WTC11 (cell line): ENCODE measurements at regions of chr1 and their contacts with region 1.

Region 1: GRCh38 chr1:23559136-23559984 is at the start of gene ID3:
- DNase-seq: peak; percentile 96
- ATAC-seq: peak; percentile 47
- H3K4me3 Mint-ChIP-seq: peak within 1 kb of the TSS; percentile 94
- H3K27ac Mint-ChIP-seq: peak within 1 kb of the TSS; percentile 98
- H3K4me1 Mint-ChIP-seq: peaks cover 74% of the 10 kb centered on the region
- H3K27me3 Mint-ChIP-seq: no peaks in the 10 kb centered on the region
- CTCF ChIP-seq: no peak
- total RNA-seq, gene ID3: 168 to 278 TPM (median 273 TPM) in 3 replicates

Region 2: DNA sequence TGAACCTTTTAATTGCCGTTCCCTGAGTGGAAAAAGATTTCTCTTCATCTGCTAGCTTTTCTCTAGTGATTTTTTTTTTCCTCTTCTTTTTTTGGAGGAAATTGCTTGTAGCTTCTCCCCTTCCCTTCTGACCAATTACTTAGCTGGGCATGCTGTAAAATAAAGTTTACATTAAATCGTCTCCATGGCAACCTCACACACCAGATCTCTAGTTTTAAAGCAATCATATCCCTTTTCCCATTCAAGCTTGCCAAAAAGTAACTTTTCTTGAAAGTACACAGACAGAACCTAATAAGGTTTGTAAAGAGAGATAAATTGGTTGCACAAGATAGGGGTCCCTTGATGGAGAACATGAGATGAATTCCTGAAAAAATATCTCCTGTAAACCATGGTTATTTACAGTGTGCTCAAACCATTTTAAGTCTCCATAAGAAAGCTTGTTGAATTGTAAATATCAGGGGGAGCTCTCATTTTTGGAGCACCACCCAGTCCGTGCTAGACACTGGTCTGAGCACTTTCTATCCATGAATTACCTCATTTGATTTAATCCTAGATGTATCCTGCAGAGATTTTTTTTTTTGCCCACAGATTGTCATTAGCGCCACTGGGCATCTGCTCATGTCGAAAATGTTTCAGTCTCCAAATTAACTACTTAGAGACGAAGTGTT is 309.4 kb before region 1 on chr1:
- CTCF ChIA-PET with region 1: no interaction called
- POLR2A ChIA-PET with region 1: no interaction called
- DNase-seq: no peak
- ATAC-seq: no peak
- H3K4me3 Mint-ChIP-seq: no peak overlapping the region
- H3K27ac Mint-ChIP-seq: no peak overlapping the region
- H3K4me1 Mint-ChIP-seq: peaks cover 19% of the 10 kb centered on the region
- H3K27me3 Mint-ChIP-seq: no peaks in the 10 kb centered on the region; the same call in 1 of the 2 replicates
- CTCF ChIP-seq: no peak

Region 3: DNA sequence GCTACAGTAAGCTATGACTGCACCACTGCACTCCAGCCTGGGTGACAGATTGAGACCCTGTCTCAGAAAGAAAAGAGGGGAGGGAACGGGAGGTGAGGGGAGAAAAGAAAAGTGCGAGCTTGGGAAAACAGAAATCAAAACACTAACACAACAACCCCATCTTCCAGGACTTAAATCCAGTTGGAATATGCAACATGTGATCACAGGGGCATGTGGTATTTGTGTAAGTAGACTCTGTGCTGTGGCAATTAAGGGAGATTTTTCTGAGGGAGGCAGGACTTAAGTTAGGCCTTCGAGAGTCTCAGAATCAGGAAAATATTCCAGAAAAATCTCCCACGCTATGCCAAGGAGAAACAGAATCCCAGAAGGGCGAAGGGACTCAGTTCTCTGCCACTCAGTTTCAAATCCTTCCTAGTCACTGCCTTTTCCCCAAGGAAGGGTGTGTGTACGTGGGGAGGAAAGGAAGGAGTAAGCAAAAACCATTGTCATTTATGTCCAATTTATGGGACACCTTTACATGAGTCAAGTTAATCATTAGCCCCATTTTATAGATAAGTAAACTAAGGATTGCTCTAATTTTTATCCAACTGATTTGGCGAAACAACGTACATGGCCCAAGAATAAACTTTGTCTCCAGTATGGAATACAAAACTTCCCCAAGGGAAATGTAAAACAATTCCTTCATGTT is 12.3 kb before region 1 on chr1:
- CTCF ChIA-PET with region 1: interaction called, 11 read pairs
- POLR2A ChIA-PET with region 1: interaction called, 11 read pairs
- DNase-seq: no peak
- ATAC-seq: no peak
- H3K4me3 Mint-ChIP-seq: no peak overlapping the region
- H3K27ac Mint-ChIP-seq: no peak overlapping the region
- H3K4me1 Mint-ChIP-seq: peaks cover 30% of the 10 kb centered on the region
- H3K27me3 Mint-ChIP-seq: no peaks in the 10 kb centered on the region
- CTCF ChIP-seq: no peak